CD4-positive, alpha-beta T cell (primary cell): ENCODE measurements at regions of chr19 and their contacts with region 1.

Region 1: GRCh38 chr19:12757544-12758274 is 6.1 kb downstream of the BEST2 start:
- DNase-seq: peak in 13 of 14 experiments; percentile 38 to 81 (median 53)
- ATAC-seq: peak; percentile 76
- H3K4me3 ChIP-seq: no peak overlapping the region
- H3K4me3 Mint-ChIP-seq: no peak overlapping the region
- H3K27ac ChIP-seq: no peak overlapping the region
- H3K27ac Mint-ChIP-seq: no peak overlapping the region
- H3K4me1 ChIP-seq: peaks cover 14% of the 10 kb centered on the region
- H3K4me1 Mint-ChIP-seq: no peaks in the 10 kb centered on the region
- H3K27me3 ChIP-seq: peaks cover 11% of the 10 kb centered on the region in 2 experiments
- H3K27me3 Mint-ChIP-seq: peaks cover 25% of the 10 kb centered on the region
- CTCF ChIP-seq: peak; percentile 86

Region 2: GRCh38 chr19:12564016-12564664 is 193.6 kb before region 1 on chr19:
- CTCF ChIA-PET with region 1: no interaction called
- POLR2A ChIA-PET with region 1: no interaction called
- intact Hi-C with region 1: loop called in 1 of 2 experiments (anchors 2 kb)
- DNase-seq: peak; percentile 76 to 97 (median 92)
- ATAC-seq: peak; percentile 100
- H3K4me3 ChIP-seq: no peak overlapping the region
- H3K4me3 Mint-ChIP-seq: no peak overlapping the region
- H3K27ac ChIP-seq: no peak overlapping the region
- H3K27ac Mint-ChIP-seq: no peak overlapping the region
- H3K4me1 ChIP-seq: peaks cover 8% of the 10 kb centered on the region
- H3K4me1 Mint-ChIP-seq: peaks cover 5% of the 10 kb centered on the region
- H3K27me3 ChIP-seq: no peaks in the 10 kb centered on the region
- H3K27me3 Mint-ChIP-seq: no peaks in the 10 kb centered on the region
- CTCF ChIP-seq: peak; percentile 98

Region 3: DNA sequence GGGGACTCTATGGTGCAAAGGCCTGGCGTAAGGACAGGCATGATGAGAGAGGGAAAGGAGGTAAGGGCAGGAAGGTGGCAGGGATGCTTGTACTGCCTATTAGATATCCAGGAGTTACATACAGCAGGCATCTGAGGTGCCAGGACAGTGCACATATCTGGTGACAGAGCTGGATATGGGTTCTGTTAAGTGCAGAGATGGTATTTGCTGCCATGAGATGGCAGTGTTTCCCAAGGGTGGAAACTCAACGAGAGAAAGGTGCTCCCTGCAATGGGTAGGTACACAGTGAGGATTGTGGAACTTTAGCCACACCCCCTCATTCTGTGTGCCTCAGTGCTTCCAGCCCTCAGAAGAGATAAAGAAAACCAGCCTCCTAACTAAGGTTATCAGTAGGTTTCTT is 40.8 kb before region 1 on chr19:
- CTCF ChIA-PET with region 1: interaction called, 20 read pairs
- POLR2A ChIA-PET with region 1: interaction called, 7 read pairs
- intact Hi-C with region 1: loop called (anchors 1 to 2 kb)
- DNase-seq: peak in 11 of 14 experiments; percentile 21 to 79 (median 40)
- ATAC-seq: peak; percentile 83
- H3K4me3 ChIP-seq: no peak overlapping the region
- H3K4me3 Mint-ChIP-seq: peak overlapping the region; percentile 56
- H3K27ac ChIP-seq: no peak overlapping the region
- H3K27ac Mint-ChIP-seq: no peak overlapping the region
- H3K4me1 ChIP-seq: peaks cover 19% of the 10 kb centered on the region
- H3K4me1 Mint-ChIP-seq: peaks cover 26% of the 10 kb centered on the region
- H3K27me3 ChIP-seq: no peaks in the 10 kb centered on the region
- H3K27me3 Mint-ChIP-seq: no peaks in the 10 kb centered on the region
- CTCF ChIP-seq: no peak

Region 4: GRCh38 chr19:12722566-12723380 is 34.9 kb before region 1 on chr19:
- CTCF ChIA-PET with region 1: interaction called, 20 read pairs
- POLR2A ChIA-PET with region 1: interaction called, 7 read pairs
- intact Hi-C with region 1: loop called (anchors 1 to 2 kb)
- DNase-seq: peak; percentile 80 to 99 (median 90)
- ATAC-seq: peak; percentile 87
- H3K4me3 ChIP-seq: peak overlapping the region; percentile 69
- H3K4me3 Mint-ChIP-seq: peak overlapping the region; percentile 98
- H3K27ac ChIP-seq: peak overlapping the region; percentile 48 to 78
- H3K27ac Mint-ChIP-seq: peak overlapping the region; percentile 89
- H3K4me1 ChIP-seq: peaks cover 39% of the 10 kb centered on the region
- H3K4me1 Mint-ChIP-seq: peaks cover 47% of the 10 kb centered on the region
- H3K27me3 ChIP-seq: no peaks in the 10 kb centered on the region
- H3K27me3 Mint-ChIP-seq: no peaks in the 10 kb centered on the region
- CTCF ChIP-seq: no peak

Region 5: DNA sequence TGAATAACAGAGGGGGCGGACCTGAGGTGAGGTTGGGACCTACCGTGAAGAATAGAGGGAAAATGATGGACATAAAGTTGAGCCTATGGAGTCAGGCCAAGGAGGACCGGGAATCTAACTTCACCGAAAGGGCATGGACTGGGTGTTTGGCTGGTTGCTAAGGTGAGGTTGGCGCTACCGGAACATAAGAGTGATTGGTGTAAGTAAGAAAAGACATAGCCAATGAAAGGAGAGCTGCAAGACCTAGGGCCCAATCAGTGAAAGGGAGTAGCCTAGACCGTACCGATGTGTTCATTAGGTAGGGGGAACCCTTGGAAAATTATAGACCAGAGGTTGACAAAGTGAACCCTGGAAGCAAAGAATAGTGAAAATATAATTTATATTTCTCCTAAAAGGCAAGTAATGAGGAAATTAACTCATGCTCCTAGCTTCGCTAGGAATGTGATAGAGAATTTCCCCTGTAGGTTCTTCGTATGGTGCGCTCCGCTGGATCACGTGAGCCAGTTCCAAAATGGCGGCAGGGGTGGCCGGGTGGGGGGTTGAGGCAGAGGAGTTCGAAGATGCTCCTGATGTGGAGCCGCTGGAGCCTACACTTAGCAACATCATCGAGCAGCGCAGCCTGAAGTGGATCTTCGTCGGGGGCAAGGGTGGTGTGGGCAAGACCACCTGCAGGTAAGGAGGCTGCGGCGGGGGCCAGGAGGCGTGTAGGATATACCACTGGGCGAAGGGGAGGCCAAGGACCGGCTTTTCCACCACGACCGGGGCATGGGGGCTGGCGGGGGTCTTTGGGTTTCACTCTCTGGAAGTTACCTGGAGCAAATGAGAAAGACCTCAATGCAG is 20.5 kb before region 1 on chr19 and contains the start of gene GET3:
- CTCF ChIA-PET with region 1: interaction called, 12 read pairs
- POLR2A ChIA-PET with region 1: interaction called, 4 read pairs
- intact Hi-C with region 1: loop called in 1 of 2 experiments (anchors 1 kb)
- DNase-seq: peak; percentile 66 to 92 (median 74)
- ATAC-seq: peak; percentile 82
- H3K4me3 ChIP-seq: peak within 1 kb of the TSS; percentile 79
- H3K4me3 Mint-ChIP-seq: peak within 1 kb of the TSS; percentile 96
- H3K27ac ChIP-seq: peak within 1 kb of the TSS; percentile 76
- H3K27ac Mint-ChIP-seq: peak within 1 kb of the TSS; percentile 86
- H3K4me1 ChIP-seq: peaks cover 52% of the 10 kb centered on the region
- H3K4me1 Mint-ChIP-seq: peaks cover 38% of the 10 kb centered on the region
- H3K27me3 ChIP-seq: no peaks in the 10 kb centered on the region
- H3K27me3 Mint-ChIP-seq: no peaks in the 10 kb centered on the region
- CTCF ChIP-seq: no peak
- total RNA-seq, gene GET3: 13.9 to 14.5 TPM

Region 6: DNA sequence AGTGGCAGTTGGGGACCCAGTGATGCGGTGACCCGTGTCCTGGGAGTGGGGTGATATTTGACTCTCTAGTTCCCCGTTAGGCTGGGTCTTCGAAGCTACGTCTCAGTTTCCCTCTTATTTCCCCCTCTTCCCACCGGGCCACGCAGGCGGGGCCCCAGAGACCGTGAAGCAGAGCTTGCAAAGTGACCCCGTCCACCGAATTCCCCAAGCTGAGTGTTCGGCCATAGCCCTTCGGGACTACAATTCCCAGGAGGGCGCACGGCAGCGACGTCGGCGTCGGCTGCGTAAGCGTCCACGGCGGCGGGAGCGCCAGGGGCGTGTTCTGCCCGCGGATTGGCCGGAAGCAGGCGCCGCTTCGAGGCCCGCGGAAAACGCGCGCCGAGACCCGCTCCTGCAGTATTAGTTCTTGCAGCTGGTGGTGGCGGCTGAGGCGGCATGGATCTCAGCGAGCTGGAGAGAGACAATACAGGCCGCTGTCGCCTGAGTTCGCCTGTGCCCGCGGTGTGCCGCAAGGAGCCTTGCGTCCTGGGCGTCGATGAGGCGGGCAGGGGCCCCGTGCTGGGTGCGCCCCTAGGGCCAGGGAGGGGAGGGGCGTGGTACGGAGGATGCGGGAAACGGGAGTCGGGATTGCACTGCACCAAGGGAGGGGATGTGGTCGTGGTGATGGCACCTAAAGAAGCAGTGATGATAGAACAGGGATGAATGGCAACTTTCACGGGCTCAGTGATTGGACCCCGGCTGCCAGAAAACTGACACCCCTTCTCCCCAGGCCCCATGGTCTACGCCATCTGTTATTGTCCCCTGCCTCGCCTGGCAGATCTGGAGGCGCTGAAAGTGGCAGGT is 48.8 kb after region 1 on chr19 and contains the start of gene RNASEH2A:
- CTCF ChIA-PET with region 1: interaction called, 12 read pairs
- POLR2A ChIA-PET with region 1: no interaction called
- intact Hi-C with region 1: no loop called
- DNase-seq: peak; percentile 73 to 94 (median 84)
- ATAC-seq: peak; percentile 91
- H3K4me3 ChIP-seq: peak within 1 kb of the TSS; percentile 64
- H3K4me3 Mint-ChIP-seq: peak within 1 kb of the TSS; percentile 96
- H3K27ac ChIP-seq: peak within 1 kb of the TSS in 1 of 2 donors; percentile 23
- H3K27ac Mint-ChIP-seq: peak within 1 kb of the TSS; percentile 88
- H3K4me1 ChIP-seq: peaks cover 26% of the 10 kb centered on the region
- H3K4me1 Mint-ChIP-seq: peaks cover 21% of the 10 kb centered on the region
- H3K27me3 ChIP-seq: no peaks in the 10 kb centered on the region
- H3K27me3 Mint-ChIP-seq: no peaks in the 10 kb centered on the region
- CTCF ChIP-seq: no peak
- total RNA-seq, gene RNASEH2A: 1.5 to 2.7 TPM

Region 7: DNA sequence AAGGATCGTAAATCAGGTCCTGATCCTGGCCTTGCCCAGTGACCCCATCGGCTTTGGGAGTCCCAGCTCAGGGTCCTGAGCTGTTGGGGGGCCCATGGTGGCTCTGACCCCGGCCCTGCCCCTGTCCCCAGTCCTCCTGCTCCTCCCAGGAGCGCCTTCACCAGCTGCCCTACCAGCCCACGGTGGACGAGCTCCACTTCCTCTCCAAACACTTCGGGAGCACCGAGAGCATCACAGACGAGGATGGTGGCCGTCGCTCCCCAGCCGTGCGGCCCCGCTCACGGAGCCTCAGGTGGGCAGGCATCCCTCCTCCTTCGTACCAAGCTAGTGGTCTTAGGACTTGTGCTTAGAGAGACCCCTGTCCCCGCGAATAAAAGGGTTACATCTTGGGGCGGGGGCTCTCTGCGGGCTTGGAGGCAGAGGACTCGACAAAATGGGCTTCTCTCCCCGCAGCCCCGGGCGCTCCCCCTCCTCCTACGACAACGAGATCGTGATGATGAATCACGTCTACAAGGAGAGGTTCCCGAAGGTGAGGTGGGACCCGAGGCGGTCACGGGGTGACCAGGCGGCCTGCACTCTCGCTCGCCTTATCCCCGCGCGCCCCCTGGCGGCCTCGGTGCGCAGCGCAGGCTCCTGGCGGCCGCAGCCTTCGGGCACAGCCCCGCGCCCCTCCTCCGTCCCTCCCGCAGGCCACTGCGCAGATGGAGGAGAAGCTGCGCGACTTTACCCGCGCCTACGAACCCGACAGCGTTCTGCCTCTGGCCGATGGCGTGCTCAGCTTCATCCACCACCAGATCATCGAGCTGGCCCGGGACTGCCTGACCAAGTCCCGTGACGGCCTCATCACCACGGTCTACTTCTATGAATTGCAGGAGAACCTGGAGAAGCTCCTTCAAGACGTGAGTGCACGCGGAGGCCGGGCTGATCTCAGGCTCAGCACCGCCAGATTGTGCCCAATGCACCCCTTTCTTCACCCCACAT is 89.7 kb after region 1 on chr19:
- CTCF ChIA-PET with region 1: interaction called, 29 read pairs
- POLR2A ChIA-PET with region 1: interaction called, 3 read pairs
- intact Hi-C with region 1: loop called in 1 of 2 experiments (anchors 1 kb)
- DNase-seq: peak; percentile 59 to 88 (median 77)
- ATAC-seq: peak; percentile 95
- H3K4me3 ChIP-seq: peak overlapping the region; percentile 31
- H3K4me3 Mint-ChIP-seq: no peak overlapping the region
- H3K27ac ChIP-seq: no peak overlapping the region
- H3K27ac Mint-ChIP-seq: no peak overlapping the region
- H3K4me1 ChIP-seq: peaks cover 11% of the 10 kb centered on the region
- H3K4me1 Mint-ChIP-seq: no peaks in the 10 kb centered on the region
- H3K27me3 ChIP-seq: peaks cover 29 to 41% of the 10 kb centered on the region in 2 experiments
- H3K27me3 Mint-ChIP-seq: peaks cover 43% of the 10 kb centered on the region
- CTCF ChIP-seq: peak; percentile 99

Region 8: GRCh38 chr19:12924616-12925276 is 167.0 kb after region 1 on chr19:
- CTCF ChIA-PET with region 1: no interaction called
- POLR2A ChIA-PET with region 1: no interaction called
- intact Hi-C with region 1: no loop called
- DNase-seq: no peak
- ATAC-seq: no peak
- H3K4me3 ChIP-seq: no peak overlapping the region
- H3K4me3 Mint-ChIP-seq: no peak overlapping the region
- H3K27ac ChIP-seq: no peak overlapping the region
- H3K27ac Mint-ChIP-seq: no peak overlapping the region
- H3K4me1 ChIP-seq: peaks cover 1% of the 10 kb centered on the region
- H3K4me1 Mint-ChIP-seq: peaks cover 3% of the 10 kb centered on the region
- H3K27me3 ChIP-seq: no peaks in the 10 kb centered on the region
- H3K27me3 Mint-ChIP-seq: no peaks in the 10 kb centered on the region
- CTCF ChIP-seq: no peak